PC-9 (cell line): ENCODE measurements at regions of chr9 and their contacts with region 1.

Region 1: DNA sequence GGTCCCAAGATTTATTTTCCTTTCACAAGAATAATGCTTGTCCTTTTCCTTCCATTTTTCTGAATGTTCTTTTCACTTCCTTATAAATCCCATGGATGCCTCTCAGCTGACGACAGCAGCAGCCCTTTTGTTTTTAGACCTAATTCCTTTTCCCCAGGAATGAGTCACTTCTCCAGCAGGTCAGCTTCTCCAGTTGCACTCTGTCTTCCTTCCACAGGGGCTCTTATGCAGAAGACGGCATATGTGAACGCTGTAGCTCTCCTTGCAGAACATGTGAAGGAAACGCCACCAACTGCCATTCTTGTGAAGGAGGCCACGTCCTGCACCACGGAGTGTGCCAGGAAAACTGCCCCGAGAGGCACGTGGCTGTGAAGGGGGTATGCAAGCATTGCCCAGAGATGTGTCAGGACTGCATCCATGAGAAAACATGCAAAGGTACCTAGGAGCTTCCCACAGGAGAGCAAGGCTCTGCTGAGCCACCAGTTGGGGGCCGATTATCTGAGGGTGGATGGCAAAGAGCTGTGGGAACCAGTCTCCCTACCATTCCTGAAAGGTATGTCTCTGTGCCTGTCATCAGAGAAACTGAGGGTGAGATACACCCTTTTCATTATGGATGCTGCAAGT is 72.9 kb downstream of the RFK start:
- DNase-seq: peak; percentile 58 to 86
- H3K4me3 ChIP-seq: no peak overlapping the region
- H3K27ac ChIP-seq: peak overlapping the region; percentile 82
- H3K4me1 ChIP-seq: peaks cover 34% of the 10 kb centered on the region
- H3K27me3 ChIP-seq: no peaks in the 10 kb centered on the region
- CTCF ChIP-seq: no peak

Region 2: DNA sequence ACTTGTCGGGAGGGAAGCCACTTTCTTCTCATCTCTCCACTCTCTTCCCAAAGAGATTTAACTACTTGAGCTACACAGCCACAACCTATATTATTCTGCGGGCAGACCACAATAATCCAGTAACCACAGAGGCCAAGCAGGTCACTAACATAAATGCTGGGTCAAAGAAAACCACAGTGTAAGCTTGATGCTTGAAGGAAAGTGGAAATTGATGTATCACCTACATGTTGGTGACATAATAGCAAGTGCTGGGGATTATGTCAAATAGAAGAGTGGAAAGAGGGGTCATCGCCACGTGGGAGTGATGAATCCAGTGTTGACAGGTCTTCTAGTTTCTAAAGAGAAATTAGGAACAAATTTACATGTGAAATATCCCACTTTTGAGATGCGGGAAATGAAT is 32.0 kb after region 1 on chr9:
- CTCF ChIA-PET with region 1: no interaction called
- POLR2A ChIA-PET with region 1: no interaction called
- intact Hi-C with region 1: loop called (anchors 2 kb)
- DNase-seq: peak; percentile 29 to 59
- H3K4me3 ChIP-seq: no peak overlapping the region
- H3K27ac ChIP-seq: no peak overlapping the region
- H3K4me1 ChIP-seq: peaks cover 21% of the 10 kb centered on the region
- H3K27me3 ChIP-seq: no peaks in the 10 kb centered on the region
- CTCF ChIP-seq: no peak

Region 3: DNA sequence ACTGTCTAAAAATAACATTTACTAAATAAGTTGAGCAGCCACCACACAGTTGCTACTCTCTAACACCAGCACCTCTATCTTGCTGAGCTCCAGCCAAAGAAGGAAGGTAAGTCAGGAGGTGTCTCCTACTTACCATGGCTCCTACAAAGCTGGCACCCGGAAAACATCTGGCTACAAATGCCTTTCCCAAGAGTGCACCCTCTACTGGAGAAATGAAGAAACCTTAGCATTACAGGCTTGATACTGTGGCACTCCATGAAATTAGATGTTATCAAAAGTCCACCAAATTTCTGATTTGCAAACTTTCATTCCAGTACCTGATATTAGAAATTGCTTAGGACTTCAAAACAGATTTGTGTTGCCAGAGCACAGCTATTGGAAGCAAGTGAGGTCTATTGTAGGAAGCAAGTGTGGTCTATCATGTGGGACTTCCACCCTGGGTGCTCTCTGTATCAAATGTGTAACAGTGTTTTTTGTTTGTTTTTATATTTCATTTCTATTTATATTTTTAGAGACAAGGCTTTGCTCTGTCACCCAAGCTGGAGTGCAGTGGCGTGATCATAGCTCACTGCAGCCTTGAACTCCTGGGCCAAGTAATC is 98.6 kb after region 1 on chr9:
- CTCF ChIA-PET with region 1: no interaction called
- POLR2A ChIA-PET with region 1: no interaction called
- intact Hi-C with region 1: no loop called
- DNase-seq: no peak
- H3K4me3 ChIP-seq: no peak overlapping the region
- H3K27ac ChIP-seq: no peak overlapping the region
- H3K4me1 ChIP-seq: no peaks in the 10 kb centered on the region
- H3K27me3 ChIP-seq: no peaks in the 10 kb centered on the region
- CTCF ChIP-seq: peak; percentile 69

Region 4: DNA sequence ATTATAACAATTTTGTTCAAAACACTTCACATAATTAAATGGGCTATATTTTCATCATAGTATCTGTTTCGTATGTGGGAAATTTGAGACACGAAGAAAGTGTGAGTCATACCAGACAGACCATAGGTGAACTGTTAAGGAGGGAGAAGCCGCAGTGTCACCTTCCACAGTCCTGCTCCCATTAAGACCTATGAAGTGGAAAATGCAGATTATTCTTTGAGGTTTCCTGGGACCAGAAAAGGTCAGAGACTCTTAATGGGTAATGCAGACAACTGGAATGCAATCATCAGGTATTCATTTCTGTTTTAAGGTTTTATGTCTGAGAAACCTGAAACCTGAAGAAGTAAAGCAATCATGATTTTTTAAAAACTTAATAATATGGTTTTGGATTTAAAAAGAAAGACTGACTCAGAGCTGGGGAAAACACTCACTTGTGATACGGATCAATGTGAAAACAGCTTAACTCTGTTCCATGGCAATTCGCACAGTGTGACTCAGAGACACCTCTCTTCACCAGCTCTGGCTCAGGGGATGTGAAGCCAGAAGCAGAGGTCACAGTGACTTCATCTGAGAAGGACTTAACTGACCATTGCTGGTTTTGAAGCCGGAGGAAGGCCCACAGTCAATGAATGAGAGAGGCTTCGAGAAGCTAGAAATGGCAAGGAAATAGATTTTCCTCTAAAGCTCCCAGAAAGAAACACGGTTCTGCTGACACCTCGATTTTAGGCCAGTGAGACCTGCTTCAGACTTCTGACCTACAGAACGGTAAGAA is 120.4 kb after region 1 on chr9:
- CTCF ChIA-PET with region 1: no interaction called
- POLR2A ChIA-PET with region 1: no interaction called
- intact Hi-C with region 1: loop called (anchors 5 kb)
- DNase-seq: peak; percentile 53 to 84
- H3K4me3 ChIP-seq: no peak overlapping the region
- H3K27ac ChIP-seq: peak overlapping the region; percentile 86
- H3K4me1 ChIP-seq: peaks cover 22% of the 10 kb centered on the region
- H3K27me3 ChIP-seq: no peaks in the 10 kb centered on the region
- CTCF ChIP-seq: no peak